ENCODE measurements at regions of chr1 and their contacts with region 1.

Region 1: DNA sequence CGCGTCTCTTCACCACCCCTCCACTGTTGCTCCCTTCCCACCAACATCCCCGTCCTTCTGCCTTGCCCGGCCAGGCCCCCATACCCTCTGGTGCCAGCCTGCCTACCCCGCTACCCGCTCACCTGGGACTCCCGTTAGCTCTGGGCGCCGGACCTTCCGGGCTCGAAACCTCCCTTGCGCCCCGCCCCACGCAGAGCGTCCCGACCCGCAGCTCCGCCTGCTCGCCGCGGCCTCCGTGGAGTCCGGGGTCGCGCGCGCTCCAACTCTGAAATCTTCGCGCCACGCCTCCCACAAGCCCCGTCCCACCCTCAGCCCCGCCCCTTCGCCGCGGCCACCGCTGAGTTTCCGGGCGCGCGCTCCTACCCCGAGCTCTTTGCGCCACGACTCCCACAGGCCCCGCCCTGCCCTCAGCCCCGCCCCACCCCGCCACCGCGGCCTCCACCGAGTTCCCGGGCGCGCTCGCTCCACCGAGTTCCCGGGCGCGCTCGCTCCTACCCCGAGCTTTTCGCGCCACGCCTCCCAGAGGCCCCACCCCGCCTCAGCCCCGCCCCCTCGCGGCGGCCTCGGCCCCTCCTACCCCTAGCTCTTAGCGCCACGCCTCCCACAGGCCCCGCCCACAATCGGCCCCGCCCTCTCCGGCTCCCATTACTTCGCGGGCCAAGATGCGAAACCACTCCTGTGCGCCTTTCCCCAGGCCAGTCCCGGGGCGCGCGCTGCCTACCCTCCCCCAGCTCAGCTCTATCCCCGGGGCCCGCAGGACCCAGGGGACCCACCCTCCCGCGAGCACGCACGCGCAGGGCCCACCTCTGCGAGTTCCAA is at the start of gene IFT25:
- DNase-seq: peak; percentile 77
- ATAC-seq: peak; percentile 88
- H3K4me3 ChIP-seq: peak within 1 kb of the TSS; percentile 92
- H3K27ac ChIP-seq: peak within 1 kb of the TSS; percentile 78
- H3K4me1 ChIP-seq: peaks cover 3% of the 10 kb centered on the region; the same call in 1 of the 2 replicates
- H3K27me3 ChIP-seq: no peaks in the 10 kb centered on the region
- CTCF ChIP-seq: no peak
- EP300 ChIP-seq: no peak
- POLR2A ChIP-seq: peak; percentile 91
- RAD21 ChIP-seq: no peak
- polyA plus RNA-seq, gene IFT25: 202 to 242 TPM

Region 2: DNA sequence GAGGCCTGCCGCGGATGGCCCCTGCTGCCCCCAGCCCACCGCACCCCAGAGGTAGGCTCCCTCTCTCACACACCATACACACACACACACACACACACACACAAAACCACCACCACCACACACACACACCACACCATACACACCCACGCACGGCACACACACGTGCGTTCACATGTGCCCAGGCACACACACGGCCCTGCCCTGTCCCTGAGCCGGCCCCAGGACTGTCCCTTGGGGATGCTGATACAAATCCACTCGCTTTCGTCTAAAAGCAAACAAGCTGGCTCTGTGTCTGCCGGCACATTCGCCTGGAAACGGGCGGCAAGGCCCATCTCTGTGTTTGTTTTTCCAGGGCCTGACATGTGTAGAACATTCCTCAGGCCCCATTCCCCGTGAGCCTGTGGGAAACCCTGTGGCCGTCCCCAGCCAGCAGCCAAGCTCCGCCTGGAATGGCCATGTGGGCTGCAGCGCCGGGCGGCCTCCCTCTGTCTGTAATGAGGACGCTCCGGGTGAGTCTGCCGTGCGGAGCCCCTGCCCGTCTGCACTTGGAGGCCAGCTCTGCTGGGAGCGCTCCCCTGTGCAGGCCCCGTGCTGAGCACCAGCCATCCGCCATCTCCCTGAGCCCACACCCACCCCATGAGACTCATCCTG is 419.1 kb before region 1 on chr1:
- CTCF ChIA-PET with region 1: no interaction called
- POLR2A ChIA-PET with region 1: no interaction called
- RAD21 ChIA-PET with region 1: no interaction called
- SMC1A ChIA-PET with region 1: no interaction called
- in situ Hi-C with region 1: no loop called
- intact Hi-C with region 1: no loop called
- DNase-seq: no peak
- ATAC-seq: no peak; the same call in 2 of the 3 replicates
- H3K4me3 ChIP-seq: no peak overlapping the region
- H3K27ac ChIP-seq: no peak overlapping the region
- H3K4me1 ChIP-seq: no peaks in the 10 kb centered on the region
- H3K27me3 ChIP-seq: peaks cover 0 to 2% of the 10 kb centered on the region in 2 experiments; a peak in 2 of 4 replicates
- CTCF ChIP-seq: no peak
- EP300 ChIP-seq: no peak
- POLR2A ChIP-seq: no peak
- RAD21 ChIP-seq: no peak

Region 3: GRCh38 chr1:53847980-53848379 is 97.7 kb before region 1 on chr1:
- CTCF ChIA-PET with region 1: interaction called, 6 read pairs
- POLR2A ChIA-PET with region 1: interaction called, 4 read pairs
- RAD21 ChIA-PET with region 1: interaction called, 5 read pairs
- SMC1A ChIA-PET with region 1: interaction called, 10 read pairs
- in situ Hi-C with region 1: no loop called
- intact Hi-C with region 1: no loop called
- DNase-seq: no peak
- ATAC-seq: no peak
- H3K4me3 ChIP-seq: no peak overlapping the region
- H3K27ac ChIP-seq: no peak overlapping the region
- H3K4me1 ChIP-seq: no peaks in the 10 kb centered on the region
- H3K27me3 ChIP-seq: no peaks in the 10 kb centered on the region
- CTCF ChIP-seq: no peak
- EP300 ChIP-seq: no peak
- POLR2A ChIP-seq: no peak
- RAD21 ChIP-seq: no peak

Region 4: GRCh38 chr1:53869454-53870117 is 76.1 kb before region 1 on chr1:
- CTCF ChIA-PET with region 1: interaction called, 81 read pairs
- POLR2A ChIA-PET with region 1: interaction called, 8 read pairs
- RAD21 ChIA-PET with region 1: interaction called, 7 read pairs
- SMC1A ChIA-PET with region 1: interaction called, 7 read pairs
- in situ Hi-C with region 1: no loop called
- intact Hi-C with region 1: no loop called
- DNase-seq: no peak
- ATAC-seq: peak; percentile 76
- H3K4me3 ChIP-seq: no peak overlapping the region
- H3K27ac ChIP-seq: no peak overlapping the region
- H3K4me1 ChIP-seq: peaks cover 5% of the 10 kb centered on the region
- H3K27me3 ChIP-seq: no peaks in the 10 kb centered on the region
- CTCF ChIP-seq: no peak
- EP300 ChIP-seq: no peak
- POLR2A ChIP-seq: no peak
- RAD21 ChIP-seq: no peak

Region 5: DNA sequence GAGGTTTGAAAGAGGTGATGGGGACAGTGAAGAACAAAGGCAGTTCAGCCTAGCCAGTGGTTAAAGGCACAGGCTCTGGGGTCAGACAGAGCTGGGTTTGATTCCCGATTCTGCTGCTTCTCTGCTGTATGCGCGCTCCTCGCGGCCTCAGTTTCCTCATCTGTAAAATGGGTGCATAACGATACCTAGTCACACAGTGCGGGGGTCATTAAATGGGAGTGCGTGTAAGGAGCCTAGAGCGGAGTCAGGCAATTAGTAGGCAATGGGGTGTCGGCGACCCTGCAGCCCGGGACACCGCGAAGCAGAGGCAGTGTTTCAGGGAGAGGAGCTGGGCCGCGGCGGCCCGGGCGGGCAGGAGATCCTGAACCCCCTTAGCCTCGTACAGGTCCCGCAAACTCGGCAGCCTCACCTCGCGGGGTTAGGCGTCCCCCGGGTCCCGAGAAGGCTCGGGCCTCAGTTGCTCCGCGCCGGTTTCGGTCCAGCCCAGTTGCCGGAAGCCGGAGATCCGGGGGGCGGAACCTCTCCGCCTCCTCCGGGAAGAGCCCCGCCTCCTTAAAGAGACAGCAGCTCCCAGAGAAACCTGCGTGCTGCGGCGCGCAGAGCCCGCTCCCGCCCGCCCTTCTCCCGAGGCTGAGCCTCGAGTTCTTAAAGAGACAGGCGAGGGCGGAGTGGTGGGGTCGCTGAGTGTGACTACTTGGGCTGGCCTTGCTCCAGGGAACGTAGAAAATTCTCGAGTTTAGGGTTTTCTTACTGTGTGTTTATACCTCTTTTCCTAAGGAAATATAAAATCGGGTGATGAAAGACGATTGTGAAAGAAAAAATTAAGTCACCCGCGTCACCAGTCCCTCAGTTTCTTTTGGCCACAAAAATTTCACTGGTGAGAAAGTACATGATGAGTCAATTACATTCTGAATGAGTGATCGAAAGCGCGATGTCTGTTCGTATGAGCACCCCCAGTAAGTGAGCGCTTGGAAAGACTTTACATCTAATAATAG is 56.0 kb before region 1 on chr1 and contains the start of gene YIPF1:
- CTCF ChIA-PET with region 1: interaction called, 6 read pairs
- POLR2A ChIA-PET with region 1: interaction called, 9 read pairs
- RAD21 ChIA-PET with region 1: interaction called, 14 read pairs
- SMC1A ChIA-PET with region 1: interaction called, 10 read pairs
- in situ Hi-C with region 1: loop called (anchors 5 kb)
- intact Hi-C with region 1: no loop called
- DNase-seq: peak; percentile 48
- ATAC-seq: peak; percentile 98
- H3K4me3 ChIP-seq: peak within 1 kb of the TSS; percentile 80
- H3K27ac ChIP-seq: peak within 1 kb of the TSS; percentile 85
- H3K4me1 ChIP-seq: peaks cover 5% of the 10 kb centered on the region; the same call in 1 of the 2 replicates
- H3K27me3 ChIP-seq: no peaks in the 10 kb centered on the region
- CTCF ChIP-seq: peak in 1 of 3 experiments; percentile 7; a peak in 1 of 6 replicates
- EP300 ChIP-seq: no peak
- POLR2A ChIP-seq: peak; percentile 87
- RAD21 ChIP-seq: no peak
- polyA plus RNA-seq, gene YIPF1: 13.0 to 15.7 TPM

Region 6: GRCh38 chr1:53919675-53920066 is 26.0 kb before region 1 on chr1:
- CTCF ChIA-PET with region 1: interaction called, 12 read pairs
- POLR2A ChIA-PET with region 1: interaction called, 6 read pairs
- RAD21 ChIA-PET with region 1: interaction called, 5 read pairs
- SMC1A ChIA-PET with region 1: interaction called, 13 read pairs
- in situ Hi-C with region 1: no loop called
- intact Hi-C with region 1: no loop called
- DNase-seq: no peak
- ATAC-seq: no peak
- H3K4me3 ChIP-seq: no peak overlapping the region
- H3K27ac ChIP-seq: no peak overlapping the region
- H3K4me1 ChIP-seq: no peaks in the 10 kb centered on the region
- H3K27me3 ChIP-seq: no peaks in the 10 kb centered on the region
- CTCF ChIP-seq: no peak
- EP300 ChIP-seq: no peak
- POLR2A ChIP-seq: no peak
- RAD21 ChIP-seq: no peak

Region 7: DNA sequence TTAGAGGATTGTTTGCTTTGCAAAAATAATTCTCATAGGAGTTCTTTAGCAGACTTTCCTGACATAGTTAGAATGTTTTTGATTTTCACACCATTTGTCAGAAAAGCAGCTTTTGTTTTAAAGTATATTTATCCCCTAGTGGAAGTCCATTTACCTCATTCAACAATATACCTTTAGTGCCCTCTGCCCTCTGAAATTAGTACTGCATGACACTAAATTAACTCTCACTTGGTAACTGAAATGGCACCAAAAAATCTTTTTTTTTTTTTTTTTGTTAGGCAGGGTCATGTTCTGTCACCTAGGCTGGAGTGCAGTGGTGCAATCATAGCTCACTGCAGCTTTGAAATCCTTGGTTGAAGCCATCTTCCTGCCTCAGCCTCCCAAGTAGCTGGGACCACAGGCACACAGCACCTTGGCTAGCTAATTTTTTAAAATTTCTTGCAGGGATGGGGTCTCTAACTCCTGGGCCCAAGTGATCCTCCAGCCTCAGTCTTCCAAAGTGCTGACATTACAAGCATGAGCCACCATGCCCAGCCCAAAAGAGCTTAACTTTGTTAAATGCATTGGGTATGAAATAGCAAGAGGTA is 14.1 kb after region 1 on chr1:
- CTCF ChIA-PET with region 1: interaction called, 72 read pairs
- POLR2A ChIA-PET with region 1: interaction called, 7 read pairs
- RAD21 ChIA-PET with region 1: interaction called, 19 read pairs
- SMC1A ChIA-PET with region 1: interaction called, 39 read pairs
- in situ Hi-C with region 1: no loop called
- intact Hi-C with region 1: no loop called
- DNase-seq: no peak
- ATAC-seq: peak; percentile 81
- H3K4me3 ChIP-seq: no peak overlapping the region
- H3K27ac ChIP-seq: no peak overlapping the region
- H3K4me1 ChIP-seq: peaks cover 11% of the 10 kb centered on the region; the same call in 1 of the 2 replicates
- H3K27me3 ChIP-seq: no peaks in the 10 kb centered on the region
- CTCF ChIP-seq: peak; percentile 42 to 67 (median 57); a peak in 5 of 6 replicates
- EP300 ChIP-seq: no peak
- POLR2A ChIP-seq: no peak
- RAD21 ChIP-seq: peak; percentile 74

Region 8: DNA sequence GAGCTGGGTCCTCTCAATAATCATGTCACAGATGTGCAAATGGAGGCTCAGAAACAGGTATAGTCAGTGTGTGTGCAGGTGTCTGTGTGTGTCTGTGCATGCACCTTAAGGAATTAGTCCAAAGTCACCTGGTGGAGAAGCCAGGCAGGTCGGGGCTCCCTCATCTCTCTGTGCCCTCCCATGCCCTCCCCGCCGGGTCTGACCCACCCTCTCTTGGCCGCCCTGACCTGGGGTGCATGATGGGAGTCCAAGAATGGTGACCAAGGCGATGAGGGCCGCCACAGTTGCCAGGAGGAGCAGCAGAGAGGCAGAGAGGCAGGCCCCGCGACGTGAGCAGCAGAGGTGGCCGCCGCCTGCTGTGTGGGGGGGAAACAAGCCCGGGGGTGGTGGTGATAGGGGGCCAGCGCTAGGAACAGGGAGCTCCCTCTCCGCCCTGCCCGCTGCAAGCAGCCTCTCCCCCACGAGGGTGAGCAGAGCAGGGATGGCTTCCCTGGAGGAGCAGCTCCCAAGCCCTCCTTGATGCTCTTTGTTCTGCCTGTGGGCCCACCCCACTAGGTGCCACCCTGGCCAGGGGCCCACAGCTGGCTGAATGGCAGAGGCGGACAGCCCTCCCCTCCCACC is 68.5 kb after region 1 on chr1:
- CTCF ChIA-PET with region 1: no interaction called
- POLR2A ChIA-PET with region 1: no interaction called
- RAD21 ChIA-PET with region 1: no interaction called
- SMC1A ChIA-PET with region 1: no interaction called
- in situ Hi-C with region 1: no loop called
- intact Hi-C with region 1: no loop called
- DNase-seq: no peak
- ATAC-seq: no peak
- H3K4me3 ChIP-seq: no peak overlapping the region
- H3K27ac ChIP-seq: no peak overlapping the region
- H3K4me1 ChIP-seq: no peaks in the 10 kb centered on the region
- H3K27me3 ChIP-seq: no peaks in the 10 kb centered on the region; a peak in 2 of 4 replicates
- CTCF ChIP-seq: no peak
- EP300 ChIP-seq: no peak
- POLR2A ChIP-seq: no peak
- RAD21 ChIP-seq: no peak

Region 9: GRCh38 chr1:54052934-54053744 is 107.5 kb after region 1 on chr1 and contains the starts of genes TCEANC2 and TMEM59:
- CTCF ChIA-PET with region 1: interaction called, 5 read pairs
- POLR2A ChIA-PET with region 1: interaction called, 32 read pairs
- RAD21 ChIA-PET with region 1: interaction called, 13 read pairs
- SMC1A ChIA-PET with region 1: interaction called, 8 read pairs
- in situ Hi-C with region 1: no loop called
- intact Hi-C with region 1: loop called (anchors 2 kb)
- DNase-seq: peak; percentile 99
- ATAC-seq: peak; percentile 95
- H3K4me3 ChIP-seq: peak within 1 kb of the TSS; percentile 92
- H3K27ac ChIP-seq: peak within 1 kb of the TSS; percentile 88
- H3K4me1 ChIP-seq: peaks cover 6% of the 10 kb centered on the region
- H3K27me3 ChIP-seq: no peaks in the 10 kb centered on the region
- CTCF ChIP-seq: no peak
- EP300 ChIP-seq: no peak
- POLR2A ChIP-seq: peak; percentile 75
- RAD21 ChIP-seq: no peak
- polyA plus RNA-seq, gene TCEANC2: 5.4 to 10.5 TPM
- polyA plus RNA-seq, gene TMEM59: 112 to 128 TPM

Region 10: GRCh38 chr1:54857741-54858627 is 912.3 kb after region 1 on chr1:
- CTCF ChIA-PET with region 1: no interaction called
- POLR2A ChIA-PET with region 1: no interaction called
- RAD21 ChIA-PET with region 1: no interaction called
- SMC1A ChIA-PET with region 1: no interaction called
- in situ Hi-C with region 1: no loop called
- intact Hi-C with region 1: no loop called
- DNase-seq: no peak
- ATAC-seq: no peak
- H3K4me3 ChIP-seq: no peak overlapping the region
- H3K27ac ChIP-seq: no peak overlapping the region
- H3K4me1 ChIP-seq: peaks cover 9% of the 10 kb centered on the region
- H3K27me3 ChIP-seq: no peaks in the 10 kb centered on the region
- CTCF ChIP-seq: no peak
- EP300 ChIP-seq: no peak
- POLR2A ChIP-seq: no peak
- RAD21 ChIP-seq: no peak